Activated CD4-positive, alpha-beta T cell treated with anti-CD3 and anti-CD28 coated beads, Interleukin-2, amount 10 ng/mL, durations not matched to agents 24 days and 14 days (primary cell): ENCODE measurements at regions of chr5 and their contacts with region 1.

Region 1: DNA sequence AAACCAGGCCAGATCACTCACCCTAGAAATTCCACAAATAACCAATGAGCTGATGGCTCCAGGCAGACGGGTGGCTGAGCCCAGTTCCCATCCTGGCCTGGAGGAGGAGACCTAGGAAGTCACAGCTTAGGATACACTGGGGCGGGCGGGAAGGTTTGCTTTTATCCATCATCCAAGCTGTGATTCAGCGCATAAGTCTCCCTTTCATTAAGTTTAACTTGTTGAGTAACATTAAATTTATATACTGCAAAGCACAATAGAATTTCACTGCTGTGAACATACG is 55.7 kb downstream of the THBS4 start:
- DNase-seq: no peak
- H3K4me3 Mint-ChIP-seq: no peak overlapping the region
- H3K27ac Mint-ChIP-seq: no peak overlapping the region
- H3K4me1 Mint-ChIP-seq: peaks cover 12% of the 10 kb centered on the region
- H3K27me3 Mint-ChIP-seq: no peaks in the 10 kb centered on the region

Region 2: GRCh38 chr5:79628811-79629210 is 462.0 kb before region 1 on chr5:
- intact Hi-C with region 1: no loop called
- DNase-seq: no peak
- H3K4me3 Mint-ChIP-seq: no peak overlapping the region
- H3K27ac Mint-ChIP-seq: no peak overlapping the region
- H3K4me1 Mint-ChIP-seq: peaks cover 20% of the 10 kb centered on the region
- H3K27me3 Mint-ChIP-seq: no peaks in the 10 kb centered on the region

Region 3: GRCh38 chr5:79990598-79991507 is 100.0 kb before region 1 on chr5 and contains the start of gene MTX3:
- intact Hi-C with region 1: no loop called
- DNase-seq: peak; percentile 96
- H3K4me3 Mint-ChIP-seq: peak within 1 kb of the TSS; percentile 94
- H3K27ac Mint-ChIP-seq: peak within 1 kb of the TSS; percentile 99
- H3K4me1 Mint-ChIP-seq: peaks cover 34% of the 10 kb centered on the region
- H3K27me3 Mint-ChIP-seq: peaks cover 3% of the 10 kb centered on the region
- total RNA-seq, gene MTX3: 26.8 and 27.8 TPM in 2 replicates

Region 4: GRCh38 chr5:80275347-80275746 is 184.5 kb after region 1 on chr5:
- intact Hi-C with region 1: loop called (anchors 1 kb)
- DNase-seq: peak; percentile 69
- H3K4me3 Mint-ChIP-seq: no peak overlapping the region
- H3K27ac Mint-ChIP-seq: no peak overlapping the region
- H3K4me1 Mint-ChIP-seq: peaks cover 13% of the 10 kb centered on the region
- H3K27me3 Mint-ChIP-seq: no peaks in the 10 kb centered on the region

Region 5: GRCh38 chr5:80308526-80308925 is 217.7 kb after region 1 on chr5:
- intact Hi-C with region 1: loop called (anchors 1 kb)
- DNase-seq: no peak
- H3K4me3 Mint-ChIP-seq: no peak overlapping the region
- H3K27ac Mint-ChIP-seq: no peak overlapping the region
- H3K4me1 Mint-ChIP-seq: no peaks in the 10 kb centered on the region
- H3K27me3 Mint-ChIP-seq: peaks cover 4% of the 10 kb centered on the region